CD8-positive, alpha-beta T cell (primary cell): ENCODE measurements at regions of chr12 and their contacts with region 1.

Region 1: DNA sequence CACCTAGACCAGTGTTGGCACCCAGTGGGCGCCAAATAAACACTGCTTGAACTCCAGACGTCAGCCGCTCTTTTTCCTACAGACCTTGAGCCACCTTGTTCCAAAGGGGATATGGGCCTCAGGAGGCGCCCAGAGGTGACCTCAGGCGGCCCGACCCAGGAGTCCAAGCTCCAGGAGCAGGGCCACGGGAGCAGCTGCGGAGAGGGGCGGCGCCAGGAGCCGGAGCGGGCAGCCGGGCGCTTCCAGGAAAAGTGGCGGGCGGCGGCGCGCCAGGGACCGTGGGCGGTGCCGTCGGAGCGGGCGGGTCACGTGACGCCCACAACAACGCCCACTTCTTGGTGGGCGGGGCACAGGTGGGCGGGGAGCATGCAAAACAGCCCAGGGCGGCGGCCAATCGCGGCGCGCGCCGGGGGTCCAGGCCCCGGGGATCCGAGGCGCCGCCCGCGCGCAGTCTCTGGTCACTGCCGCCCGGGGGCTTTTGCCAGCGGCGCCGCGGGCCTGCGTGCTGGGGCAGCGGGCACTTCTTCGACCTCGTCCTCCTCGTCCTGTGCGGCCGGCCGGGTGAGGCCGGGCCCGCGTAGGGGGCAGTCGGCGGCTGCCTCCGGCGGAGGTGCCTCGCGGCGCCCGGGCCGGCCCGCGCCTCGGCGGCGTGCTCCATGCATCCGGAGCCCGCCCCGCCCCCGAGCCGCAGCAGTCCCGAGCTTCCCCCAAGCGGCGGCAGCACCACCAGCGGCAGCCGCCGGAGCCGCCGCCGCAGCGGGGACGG is at the start of gene ORAI1:
- DNase-seq: peak; percentile 91 to 98 (median 96)
- ATAC-seq: peak; percentile 67
- H3K4me3 ChIP-seq: peak within 1 kb of the TSS; percentile 69 to 70
- H3K4me3 Mint-ChIP-seq: peak within 1 kb of the TSS; percentile 94
- H3K27ac ChIP-seq: peak within 1 kb of the TSS; percentile 73 to 89
- H3K27ac Mint-ChIP-seq: peak within 1 kb of the TSS; percentile 97
- H3K4me1 ChIP-seq: peaks cover 44% of the 10 kb centered on the region
- H3K4me1 Mint-ChIP-seq: peaks cover 46% of the 10 kb centered on the region
- H3K27me3 ChIP-seq: no peaks in the 10 kb centered on the region
- H3K27me3 Mint-ChIP-seq: no peaks in the 10 kb centered on the region
- CTCF ChIP-seq: no peak
- total RNA-seq, gene ORAI1: 59.0 to 62.1 TPM

Region 2: GRCh38 chr12:121499929-121500793 is 126.1 kb before region 1 on chr12:
- CTCF ChIA-PET with region 1: interaction called, 9 read pairs
- POLR2A ChIA-PET with region 1: interaction called, 3 read pairs
- intact Hi-C with region 1: loop called (anchors 1 kb)
- DNase-seq: peak; percentile 55 to 88 (median 76)
- ATAC-seq: peak; percentile 80
- H3K4me3 ChIP-seq: no peak overlapping the region
- H3K4me3 Mint-ChIP-seq: no peak overlapping the region
- H3K27ac ChIP-seq: no peak overlapping the region
- H3K27ac Mint-ChIP-seq: no peak overlapping the region
- H3K4me1 ChIP-seq: peaks cover 13% of the 10 kb centered on the region
- H3K4me1 Mint-ChIP-seq: peaks cover 12% of the 10 kb centered on the region
- H3K27me3 ChIP-seq: no peaks in the 10 kb centered on the region
- H3K27me3 Mint-ChIP-seq: no peaks in the 10 kb centered on the region
- CTCF ChIP-seq: peak; percentile 97

Region 3: DNA sequence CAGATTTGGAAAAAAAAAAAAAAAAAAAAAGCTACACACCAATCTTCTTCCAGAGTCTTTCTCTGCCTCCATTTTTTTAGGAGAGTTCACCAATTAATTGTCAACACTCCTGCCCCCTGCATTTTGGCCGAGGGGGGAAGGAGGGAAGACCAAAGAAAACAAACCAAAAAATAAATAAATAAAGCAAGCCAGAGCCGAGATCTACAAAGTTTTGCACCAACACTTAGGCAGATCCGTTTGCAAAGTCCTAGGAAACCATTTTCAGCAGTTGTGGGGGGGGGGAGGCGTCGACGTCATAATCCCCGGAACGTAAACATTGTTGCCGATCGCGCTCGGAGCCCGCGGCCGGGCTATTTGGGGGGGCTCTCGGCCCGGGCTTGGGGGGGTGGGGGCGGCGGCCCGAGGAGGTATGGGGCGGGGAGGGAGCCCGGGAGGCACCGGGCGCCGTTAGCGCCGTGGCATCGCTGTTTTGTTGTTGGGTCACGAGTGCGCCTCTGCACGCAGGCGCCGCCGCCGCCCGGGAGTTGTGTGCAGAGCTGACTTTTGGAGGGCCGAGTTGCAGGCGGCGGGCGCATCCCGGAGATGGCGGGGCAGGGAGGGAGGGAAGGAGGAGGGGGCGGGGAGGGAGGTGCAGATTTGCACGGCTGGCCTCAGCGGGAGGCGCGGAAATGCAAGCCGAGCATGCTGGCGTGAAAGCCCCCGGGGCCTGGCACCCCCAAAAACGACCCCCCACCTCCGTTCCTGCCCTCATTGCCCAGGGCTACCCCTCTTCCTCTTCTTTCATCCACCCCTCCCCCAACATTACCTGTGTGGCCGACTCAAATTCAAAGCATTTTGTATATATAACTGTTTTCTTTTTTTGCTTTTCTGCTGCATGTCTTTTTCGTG is 46.0 kb before region 1 on chr12:
- CTCF ChIA-PET with region 1: interaction called, 13 read pairs
- POLR2A ChIA-PET with region 1: interaction called, 48 read pairs
- intact Hi-C with region 1: loop called (anchors 1 kb)
- DNase-seq: peak; percentile 63 to 91 (median 82)
- ATAC-seq: peak; percentile 62
- H3K4me3 ChIP-seq: peak overlapping the region; percentile 58 to 73
- H3K4me3 Mint-ChIP-seq: peak overlapping the region; percentile 95
- H3K27ac ChIP-seq: peak overlapping the region; percentile 84 to 85
- H3K27ac Mint-ChIP-seq: peak overlapping the region; percentile 98
- H3K4me1 ChIP-seq: peaks cover 42% of the 10 kb centered on the region
- H3K4me1 Mint-ChIP-seq: peaks cover 51% of the 10 kb centered on the region
- H3K27me3 ChIP-seq: no peaks in the 10 kb centered on the region
- H3K27me3 Mint-ChIP-seq: no peaks in the 10 kb centered on the region
- CTCF ChIP-seq: no peak

Region 4: DNA sequence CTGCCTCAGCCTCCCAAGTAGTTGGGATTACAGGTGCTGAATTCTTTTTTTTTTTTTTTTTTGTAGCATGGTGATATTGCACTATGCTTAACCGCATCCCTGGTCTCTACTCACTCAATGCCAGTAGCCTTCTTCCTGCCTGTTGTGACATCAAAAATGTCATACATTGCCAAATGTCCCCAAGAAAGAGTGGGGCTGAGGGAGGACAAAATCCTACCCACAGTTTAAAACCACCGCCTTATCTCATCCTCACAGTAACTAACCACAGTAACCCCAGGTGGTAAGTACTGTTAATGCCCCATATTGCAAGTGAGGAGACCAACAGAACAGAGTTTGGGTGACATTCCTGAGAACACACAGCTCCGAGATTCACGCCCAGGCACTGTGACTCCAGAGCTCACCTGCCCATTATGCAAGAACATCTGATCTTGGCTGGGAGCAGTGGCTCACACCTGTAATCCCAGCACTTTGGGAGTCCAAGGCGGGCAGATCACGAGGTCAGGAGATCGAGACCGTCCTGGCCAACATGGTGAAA is 23.6 kb after region 1 on chr12:
- CTCF ChIA-PET with region 1: interaction called, 11 read pairs
- POLR2A ChIA-PET with region 1: interaction called, 5 read pairs
- intact Hi-C with region 1: no loop called
- DNase-seq: peak in 3 of 9 experiments; percentile 33 to 88 (median 78)
- ATAC-seq: peak; percentile 79
- H3K4me3 ChIP-seq: no peak overlapping the region
- H3K4me3 Mint-ChIP-seq: peak overlapping the region; percentile 9
- H3K27ac ChIP-seq: peak overlapping the region in 1 of 2 experiments; percentile 47
- H3K27ac Mint-ChIP-seq: peak overlapping the region; percentile 63
- H3K4me1 ChIP-seq: peaks cover 12% of the 10 kb centered on the region
- H3K4me1 Mint-ChIP-seq: peaks cover 33% of the 10 kb centered on the region
- H3K27me3 ChIP-seq: no peaks in the 10 kb centered on the region
- H3K27me3 Mint-ChIP-seq: no peaks in the 10 kb centered on the region
- CTCF ChIP-seq: no peak

Region 5: GRCh38 chr12:121678716-121679580 is 52.7 kb after region 1 on chr12:
- CTCF ChIA-PET with region 1: interaction called, 35 read pairs
- POLR2A ChIA-PET with region 1: interaction called, 4 read pairs
- intact Hi-C with region 1: no loop called
- DNase-seq: no peak
- ATAC-seq: no peak
- H3K4me3 ChIP-seq: no peak overlapping the region
- H3K4me3 Mint-ChIP-seq: no peak overlapping the region
- H3K27ac ChIP-seq: no peak overlapping the region
- H3K27ac Mint-ChIP-seq: peak overlapping the region; percentile 83
- H3K4me1 ChIP-seq: peaks cover 5% of the 10 kb centered on the region
- H3K4me1 Mint-ChIP-seq: peaks cover 12% of the 10 kb centered on the region
- H3K27me3 ChIP-seq: no peaks in the 10 kb centered on the region
- H3K27me3 Mint-ChIP-seq: no peaks in the 10 kb centered on the region
- CTCF ChIP-seq: no peak

Region 6: DNA sequence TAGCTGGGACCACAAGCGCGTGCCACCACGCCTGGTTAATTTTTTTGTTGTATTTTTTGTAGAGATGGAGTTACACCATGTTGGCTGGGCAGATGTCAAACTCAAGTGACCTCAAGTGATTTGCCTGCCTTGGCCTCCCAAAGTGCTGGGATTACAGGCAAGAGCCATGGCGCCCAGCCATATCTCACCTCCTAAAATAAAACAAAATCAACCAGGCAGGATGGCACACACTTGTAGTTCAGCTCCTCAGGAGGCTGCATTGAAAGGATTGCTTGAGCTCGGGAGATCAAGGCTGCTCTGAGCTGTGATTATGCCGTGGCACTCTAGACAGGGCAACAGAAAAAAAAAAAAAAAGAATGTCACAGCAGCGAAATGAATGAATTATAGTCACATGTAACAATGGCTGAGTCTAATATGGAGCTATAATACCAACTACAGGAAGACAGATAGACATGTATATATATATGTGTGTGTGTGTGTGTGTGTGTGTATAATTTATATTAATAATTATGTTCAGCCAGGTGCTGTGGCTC is 67.0 kb after region 1 on chr12:
- CTCF ChIA-PET with region 1: no interaction called
- POLR2A ChIA-PET with region 1: no interaction called
- intact Hi-C with region 1: no loop called
- DNase-seq: no peak
- ATAC-seq: no peak
- H3K4me3 ChIP-seq: no peak overlapping the region
- H3K4me3 Mint-ChIP-seq: no peak overlapping the region
- H3K27ac ChIP-seq: no peak overlapping the region
- H3K27ac Mint-ChIP-seq: no peak overlapping the region
- H3K4me1 ChIP-seq: no peaks in the 10 kb centered on the region
- H3K4me1 Mint-ChIP-seq: peaks cover 2% of the 10 kb centered on the region
- H3K27me3 ChIP-seq: no peaks in the 10 kb centered on the region
- H3K27me3 Mint-ChIP-seq: no peaks in the 10 kb centered on the region
- CTCF ChIP-seq: no peak